IMR-90 (cell line): ENCODE measurements at regions of chr5 and their contacts with region 1.

Region 1: DNA sequence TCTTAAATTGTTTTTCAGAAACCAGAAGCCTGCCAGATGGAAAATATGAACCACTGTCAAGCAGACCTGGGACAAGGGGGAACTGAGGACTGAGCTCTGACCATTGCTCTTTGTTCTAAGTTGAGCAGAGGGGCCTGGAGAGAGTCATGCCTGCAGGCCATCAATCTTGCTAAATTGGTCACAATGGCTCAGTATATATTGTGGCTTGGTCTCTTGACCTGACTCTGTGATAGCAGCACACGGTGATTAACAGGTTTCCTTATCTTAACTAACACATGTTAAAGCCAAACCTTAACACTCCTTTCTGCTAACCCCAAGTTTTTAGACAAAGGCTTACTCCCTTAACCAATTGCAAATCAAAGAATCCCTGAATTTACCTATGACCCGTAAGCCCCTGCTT is 1281.2 kb upstream of the NUDT12 start:
- DNase-seq: no peak
- ATAC-seq: no peak
- H3K4me3 ChIP-seq: no peak overlapping the region
- H3K27ac ChIP-seq: no peak overlapping the region
- H3K4me1 ChIP-seq: no peaks in the 10 kb centered on the region
- H3K27me3 ChIP-seq: no peaks in the 10 kb centered on the region
- CTCF ChIP-seq: no peak
- POLR2A ChIP-seq: no peak
- RAD21 ChIP-seq: no peak

Region 2: GRCh38 chr5:104734046-104734445 is 109.8 kb before region 1 on chr5:
- CTCF ChIA-PET with region 1: no interaction called
- POLR2A ChIA-PET with region 1: no interaction called
- dilution Hi-C with region 1: no loop called
- in situ Hi-C with region 1: no loop called
- intact Hi-C with region 1: loop called (anchors 5 kb)
- DNase-seq: no peak
- ATAC-seq: no peak
- H3K4me3 ChIP-seq: no peak overlapping the region
- H3K27ac ChIP-seq: no peak overlapping the region
- H3K4me1 ChIP-seq: no peaks in the 10 kb centered on the region
- H3K27me3 ChIP-seq: no peaks in the 10 kb centered on the region
- CTCF ChIP-seq: no peak
- POLR2A ChIP-seq: no peak
- RAD21 ChIP-seq: no peak